ENCODE measurements at regions of chr2 and their contacts with region 1.

Region 1: DNA sequence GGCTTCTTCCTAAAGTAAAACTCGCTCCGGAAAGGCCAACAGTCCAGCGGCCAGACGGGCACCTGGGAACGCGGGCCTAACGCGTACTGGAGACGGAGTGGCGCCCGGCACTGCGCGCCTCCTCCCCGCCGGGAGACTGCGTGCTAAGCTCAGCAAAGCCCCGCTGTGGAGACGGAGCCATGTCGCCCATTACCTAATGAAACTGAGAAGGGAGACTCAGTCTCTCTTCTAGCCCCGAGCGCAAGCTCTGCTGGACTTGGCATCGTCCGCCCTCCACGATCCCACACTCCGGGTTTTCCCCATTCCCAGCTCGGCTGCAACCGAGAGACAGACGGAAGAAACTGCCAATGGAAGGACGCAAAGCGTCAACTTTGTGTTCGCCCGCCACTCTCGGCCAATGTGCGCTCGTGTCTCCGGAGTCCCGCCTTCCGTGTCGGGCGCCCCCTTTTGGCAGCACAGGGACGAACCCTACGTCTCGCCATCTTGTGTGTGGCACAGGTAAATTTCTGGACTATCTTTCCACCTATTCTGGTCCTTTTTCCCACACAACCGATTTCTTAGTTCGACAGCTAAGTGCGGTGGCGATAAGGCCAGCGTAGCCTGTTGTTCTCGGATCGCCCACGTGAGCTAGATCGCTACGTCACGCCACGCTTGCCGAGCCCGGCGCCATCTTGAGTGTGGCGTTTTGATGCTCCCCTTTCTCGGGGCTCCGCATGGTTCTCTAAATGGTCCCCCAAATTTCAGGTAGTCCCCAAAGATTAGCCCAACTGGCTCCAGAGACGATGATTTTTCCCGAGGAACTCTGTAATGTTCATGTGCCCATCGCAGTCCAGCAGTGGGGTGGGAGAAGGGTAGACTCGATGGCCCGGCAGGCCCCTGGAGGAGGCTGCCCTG is 1.3 kb upstream of the PTMA start:
- DNase-seq: peak; percentile 90
- H3K4me3 ChIP-seq: peak overlapping the region; percentile 75
- CTCF ChIP-seq: peak; percentile 93

Region 2: DNA sequence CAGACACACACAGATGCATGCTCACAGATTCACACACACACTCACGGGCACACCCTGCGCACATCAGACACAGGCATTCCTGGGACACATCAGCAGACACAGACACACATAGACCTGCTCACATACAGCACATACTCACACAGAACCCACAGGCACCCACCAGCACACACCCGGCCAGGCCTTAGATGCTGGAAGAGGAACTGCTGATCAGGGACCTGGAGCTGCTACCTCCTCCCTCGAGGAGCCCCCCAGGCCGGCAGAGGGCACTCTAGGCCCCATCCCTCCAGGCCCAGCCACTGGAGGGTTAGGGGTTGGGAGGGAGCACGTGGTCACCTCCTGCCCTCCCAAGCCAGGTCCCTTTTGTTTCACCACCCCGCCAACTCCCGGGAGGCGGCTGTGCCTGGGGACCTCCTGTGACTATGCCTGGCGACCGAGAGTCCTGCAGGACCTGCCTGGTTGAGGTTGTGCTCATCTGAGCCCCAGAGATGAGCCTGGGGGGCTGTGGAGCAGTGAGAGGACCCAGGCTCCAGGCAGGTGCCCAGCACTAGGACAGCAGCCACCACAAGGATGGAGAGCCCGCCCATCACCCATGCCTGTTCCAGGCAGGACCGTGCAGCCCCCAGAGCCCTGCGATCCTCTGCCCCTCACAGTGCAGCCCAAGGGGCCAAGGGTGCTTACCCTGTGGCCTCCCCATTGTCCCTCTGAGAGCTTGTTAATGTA is 19.7 kb before region 1 on chr2:
- CTCF ChIA-PET with region 1: interaction called, 743 read pairs
- POLR2A ChIA-PET with region 1: interaction called, 6 read pairs
- DNase-seq: no peak
- H3K4me3 ChIP-seq: no peak overlapping the region
- CTCF ChIP-seq: peak; percentile 73

Region 3: GRCh38 chr2:232026910-232027309 is 319.9 kb after region 1 on chr2:
- CTCF ChIA-PET with region 1: no interaction called
- POLR2A ChIA-PET with region 1: no interaction called
- DNase-seq: no peak
- H3K4me3 ChIP-seq: no peak overlapping the region
- CTCF ChIP-seq: no peak

Measured in AG04449 (cell line).